GM10248 (cell line): ENCODE measurements at regions of chr5 and their contacts with region 1.

Region 1: DNA sequence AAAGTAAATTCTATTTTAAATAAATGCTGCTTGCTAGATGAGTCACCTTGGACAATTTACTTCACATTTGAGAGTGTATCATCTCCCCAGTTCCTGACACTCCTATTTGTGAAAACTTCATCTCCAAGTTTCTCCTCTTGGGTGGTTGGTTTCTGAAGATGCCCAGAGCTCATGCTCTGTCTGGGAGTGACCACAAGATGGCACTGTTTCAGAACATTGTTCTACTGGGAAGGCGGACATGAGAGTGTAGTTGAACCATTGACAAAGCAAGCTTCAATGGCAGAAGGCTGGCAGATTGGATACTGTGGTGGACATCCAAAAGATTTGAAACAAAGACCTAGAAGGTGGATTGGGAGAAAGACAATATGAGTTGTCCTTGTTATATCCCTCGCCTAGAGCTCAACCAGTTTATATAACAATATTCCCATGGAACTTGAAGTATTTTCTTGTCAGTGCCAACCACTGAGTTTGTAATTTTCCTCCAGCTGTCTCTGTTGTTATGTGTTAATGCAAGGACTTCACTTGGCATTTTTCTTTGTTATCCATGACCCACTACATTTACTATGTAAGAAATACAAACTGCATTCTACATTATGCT is 234.3 kb upstream of the ANKH start:
- DNase-seq: peak; percentile 43
- CTCF ChIP-seq: peak; percentile 79

Region 2: GRCh38 chr5:15116996-15117395 is 11.1 kb after region 1 on chr5:
- CTCF ChIA-PET with region 1: interaction called, 13 read pairs
- POLR2A ChIA-PET with region 1: no interaction called
- DNase-seq: no peak
- CTCF ChIP-seq: no peak

Region 3: GRCh38 chr5:15821506-15821905 is 715.6 kb after region 1 on chr5:
- CTCF ChIA-PET with region 1: interaction called, 15 read pairs
- POLR2A ChIA-PET with region 1: no interaction called
- DNase-seq: no peak
- CTCF ChIP-seq: no peak